B cell (primary cell): ENCODE measurements at regions of chr4 and their contacts with region 1.

Region 1: DNA sequence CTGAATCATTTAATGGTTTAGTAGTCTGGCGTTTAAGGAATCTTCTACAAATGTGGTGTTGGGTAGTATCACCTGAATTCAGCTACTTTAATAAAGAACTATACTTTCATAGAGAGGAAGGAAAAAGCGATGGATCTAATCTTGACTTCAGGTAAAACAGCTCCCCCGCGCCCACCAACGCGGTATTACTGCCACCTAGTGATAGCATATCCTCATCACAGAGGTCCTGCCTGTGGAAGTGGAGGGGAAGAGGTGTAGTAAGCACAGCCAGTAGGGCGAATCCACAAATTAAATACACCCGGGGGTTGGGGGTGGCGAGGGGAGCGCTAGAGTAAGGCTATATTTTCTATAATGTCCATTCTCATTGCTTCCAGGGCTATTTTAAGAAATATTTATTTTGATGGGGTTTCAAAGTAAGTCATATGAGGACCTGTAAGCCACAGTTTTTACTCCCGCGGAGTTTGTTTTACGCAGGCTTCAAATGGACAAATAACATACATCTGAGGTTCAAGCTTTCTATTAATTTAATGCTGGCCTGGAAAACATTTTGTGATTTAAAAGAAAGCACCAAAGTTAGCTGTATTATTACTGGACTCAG is 8.3 kb upstream of the DAPP1 start:
- DNase-seq: peak; percentile 80
- ATAC-seq: peak; percentile 96
- H3K4me3 ChIP-seq: no peak overlapping the region
- H3K4me3 Mint-ChIP-seq: no peak overlapping the region
- H3K27ac ChIP-seq: no peak overlapping the region
- H3K27ac Mint-ChIP-seq: no peak overlapping the region
- H3K4me1 ChIP-seq: peaks cover 0 to 20% of the 10 kb centered on the region in 2 donors
- H3K4me1 Mint-ChIP-seq: peaks cover 25% of the 10 kb centered on the region
- H3K27me3 ChIP-seq: peaks cover 0 to 2% (median 0%) of the 10 kb centered on the region in 4 experiments
- H3K27me3 Mint-ChIP-seq: peaks cover 11% of the 10 kb centered on the region
- CTCF ChIP-seq: peak; percentile 83

Region 2: DNA sequence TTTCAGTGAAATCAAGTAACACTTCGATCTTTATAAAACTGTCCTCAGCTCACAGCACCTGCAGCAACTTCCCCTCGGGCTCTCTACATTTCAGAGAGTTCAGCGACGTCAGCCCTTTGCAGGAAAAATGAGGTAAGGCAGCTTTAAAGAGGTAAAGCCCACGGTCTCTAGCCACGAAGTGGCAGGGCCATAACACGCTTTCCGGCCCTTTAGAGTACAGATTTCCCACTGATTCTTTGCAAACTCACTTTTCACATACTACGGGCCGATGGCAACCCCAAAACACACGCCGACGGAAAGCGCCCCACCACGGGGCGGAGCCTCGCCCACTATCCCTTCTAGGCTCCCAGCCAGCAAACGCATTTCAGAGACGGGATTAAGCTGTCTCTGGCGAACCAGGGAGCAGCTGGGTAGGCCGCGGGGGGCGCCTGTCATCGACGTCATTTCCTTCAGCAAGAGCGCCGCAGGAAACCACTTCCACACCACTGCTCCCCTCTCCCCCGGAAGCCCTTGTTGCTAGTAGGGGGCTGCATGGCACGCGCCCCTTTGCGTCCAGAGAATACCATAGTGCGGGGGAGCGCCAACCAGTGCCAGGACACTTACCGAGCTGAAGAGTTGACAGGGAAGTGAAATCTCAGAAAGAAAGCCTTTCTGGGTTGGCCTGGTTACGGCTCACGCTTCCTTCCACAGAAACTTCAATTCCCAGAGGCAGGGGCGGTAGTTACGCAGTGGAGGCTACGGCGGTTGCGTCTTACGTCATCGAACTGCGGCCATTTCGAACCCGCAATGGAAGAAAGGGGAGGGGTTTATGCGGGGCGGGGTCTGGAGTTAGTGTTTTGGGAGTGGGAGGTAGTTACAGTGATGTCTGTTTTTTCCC is 244.8 kb before region 1 on chr4 and contains the start of gene TRMT10A:
- CTCF ChIA-PET with region 1: interaction called, 44 read pairs
- POLR2A ChIA-PET with region 1: interaction called, 7 read pairs
- intact Hi-C with region 1: loop called (anchors 1 kb)
- DNase-seq: peak; percentile 98
- ATAC-seq: peak; percentile 84
- H3K4me3 ChIP-seq: peak within 1 kb of the TSS; percentile 73 to 92 (median 80)
- H3K4me3 Mint-ChIP-seq: peak within 1 kb of the TSS; percentile 99
- H3K27ac ChIP-seq: peak within 1 kb of the TSS; percentile 96
- H3K27ac Mint-ChIP-seq: peak within 1 kb of the TSS; percentile 100
- H3K4me1 ChIP-seq: peaks cover 4 to 9% of the 10 kb centered on the region in 2 donors
- H3K4me1 Mint-ChIP-seq: peaks cover 18% of the 10 kb centered on the region
- H3K27me3 ChIP-seq: peaks cover 0 to 9% (median 2%) of the 10 kb centered on the region in 4 experiments
- H3K27me3 Mint-ChIP-seq: peaks cover 24% of the 10 kb centered on the region
- CTCF ChIP-seq: no peak
- total RNA-seq, gene TRMT10A: 4.5 and 5.5 TPM in 2 replicates

Region 3: DNA sequence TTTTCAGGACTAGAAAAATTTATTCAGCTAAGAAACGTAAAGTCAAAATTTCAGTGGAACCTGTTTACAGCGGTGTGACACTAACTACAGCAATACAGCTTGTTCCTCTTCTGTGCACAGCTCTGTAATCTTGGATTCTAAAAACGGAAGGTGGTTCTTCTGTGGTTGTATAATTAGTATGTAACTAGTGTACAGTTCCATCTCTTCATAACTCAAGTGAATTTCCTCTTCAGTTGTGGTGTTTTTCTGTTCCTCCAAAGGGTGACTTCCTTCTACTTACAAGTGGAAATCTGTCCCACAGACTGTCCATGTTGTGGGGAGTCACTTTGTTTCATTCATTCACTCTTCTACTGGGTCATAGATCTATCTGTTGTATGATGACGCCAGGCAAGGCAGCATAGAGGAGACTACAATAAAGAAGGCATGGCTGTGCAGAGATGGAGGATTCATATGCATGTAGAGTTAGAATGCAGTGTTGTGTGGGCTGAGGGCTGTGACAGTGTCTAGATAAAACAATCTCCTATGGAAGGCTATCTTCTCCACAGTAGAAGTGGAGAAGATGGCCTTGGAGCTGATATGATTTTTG is 13.7 kb after region 1 on chr4:
- CTCF ChIA-PET with region 1: interaction called, 36 read pairs
- POLR2A ChIA-PET with region 1: interaction called, 4 read pairs
- intact Hi-C with region 1: no loop called
- DNase-seq: peak; percentile 71
- ATAC-seq: peak; percentile 68
- H3K4me3 ChIP-seq: peak overlapping the region in 4 of 5 experiments; percentile 6 to 100 (median 24)
- H3K4me3 Mint-ChIP-seq: peak overlapping the region; percentile 86
- H3K27ac ChIP-seq: peak overlapping the region; percentile 48 to 95
- H3K27ac Mint-ChIP-seq: peak overlapping the region; percentile 93
- H3K4me1 ChIP-seq: peaks cover 84 to 86% of the 10 kb centered on the region in 2 donors
- H3K4me1 Mint-ChIP-seq: peaks cover 82% of the 10 kb centered on the region
- H3K27me3 ChIP-seq: no peaks in the 10 kb centered on the region
- H3K27me3 Mint-ChIP-seq: no peaks in the 10 kb centered on the region
- CTCF ChIP-seq: no peak

Region 4: DNA sequence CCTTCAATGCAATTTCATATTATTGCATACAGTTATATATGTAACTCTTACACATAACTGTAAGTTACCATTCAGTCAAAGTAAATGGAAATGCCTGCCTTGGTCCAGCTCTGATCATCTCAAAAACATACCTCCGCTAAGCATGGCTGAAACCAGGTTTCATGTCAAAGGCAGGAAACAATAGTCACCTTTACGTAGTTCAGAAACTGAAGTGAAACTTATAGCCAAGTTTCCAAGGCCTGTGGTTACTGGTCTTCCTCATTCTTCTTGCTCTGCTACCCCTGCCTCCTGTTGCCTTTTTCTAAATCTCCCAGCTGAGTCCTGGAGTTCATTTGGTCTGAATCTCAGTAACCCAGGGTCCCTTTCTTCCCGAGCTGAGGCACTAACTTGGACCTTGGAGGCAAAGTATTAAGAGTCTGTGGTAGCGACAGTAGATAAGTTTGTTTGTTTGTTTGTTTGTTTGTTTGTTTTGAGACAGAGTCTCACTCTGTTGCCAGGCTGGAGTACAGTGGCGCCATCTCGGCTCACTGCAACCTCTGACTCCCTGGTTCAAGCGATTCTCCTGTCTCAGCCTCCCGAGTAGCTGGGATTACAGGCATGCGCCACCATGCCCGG is 39.1 kb after region 1 on chr4:
- CTCF ChIA-PET with region 1: interaction called, 34 read pairs
- POLR2A ChIA-PET with region 1: no interaction called
- intact Hi-C with region 1: no loop called
- DNase-seq: peak; percentile 79
- ATAC-seq: peak; percentile 81
- H3K4me3 ChIP-seq: no peak overlapping the region
- H3K4me3 Mint-ChIP-seq: peak overlapping the region; percentile 72
- H3K27ac ChIP-seq: peak overlapping the region; percentile 3 to 56
- H3K27ac Mint-ChIP-seq: peak overlapping the region; percentile 84
- H3K4me1 ChIP-seq: peaks cover 31 to 38% of the 10 kb centered on the region in 2 donors
- H3K4me1 Mint-ChIP-seq: peaks cover 68% of the 10 kb centered on the region
- H3K27me3 ChIP-seq: no peaks in the 10 kb centered on the region
- H3K27me3 Mint-ChIP-seq: no peaks in the 10 kb centered on the region
- CTCF ChIP-seq: no peak

Region 5: DNA sequence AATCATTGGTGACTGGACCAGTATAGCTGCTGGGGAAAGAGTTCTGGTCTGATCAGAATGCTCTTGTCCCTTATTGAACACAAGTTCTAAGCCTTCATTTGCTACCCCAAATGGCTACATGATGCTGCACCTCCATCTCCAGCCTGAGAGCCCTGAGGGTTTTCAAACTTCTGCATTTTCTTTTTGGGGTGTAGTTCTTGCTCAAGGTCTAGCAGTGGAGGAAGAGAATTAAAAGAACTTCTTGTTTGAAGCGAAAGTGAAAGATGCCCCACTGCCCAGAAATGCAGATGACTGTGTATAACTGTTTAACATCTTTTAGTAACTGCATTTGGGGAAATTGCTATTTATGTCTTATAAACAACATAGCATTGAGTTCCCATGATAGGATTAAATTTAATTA is 47.3 kb after region 1 on chr4:
- CTCF ChIA-PET with region 1: interaction called, 34 read pairs
- POLR2A ChIA-PET with region 1: no interaction called
- intact Hi-C with region 1: no loop called
- DNase-seq: peak; percentile 78
- ATAC-seq: peak; percentile 75
- H3K4me3 ChIP-seq: peak overlapping the region in 1 of 5 experiments; percentile 5
- H3K4me3 Mint-ChIP-seq: peak overlapping the region; percentile 11
- H3K27ac ChIP-seq: peak overlapping the region; percentile 31 to 84
- H3K27ac Mint-ChIP-seq: peak overlapping the region; percentile 64
- H3K4me1 ChIP-seq: peaks cover 46 to 51% of the 10 kb centered on the region in 2 donors
- H3K4me1 Mint-ChIP-seq: peaks cover 69% of the 10 kb centered on the region
- H3K27me3 ChIP-seq: no peaks in the 10 kb centered on the region
- H3K27me3 Mint-ChIP-seq: no peaks in the 10 kb centered on the region
- CTCF ChIP-seq: no peak

Region 6: DNA sequence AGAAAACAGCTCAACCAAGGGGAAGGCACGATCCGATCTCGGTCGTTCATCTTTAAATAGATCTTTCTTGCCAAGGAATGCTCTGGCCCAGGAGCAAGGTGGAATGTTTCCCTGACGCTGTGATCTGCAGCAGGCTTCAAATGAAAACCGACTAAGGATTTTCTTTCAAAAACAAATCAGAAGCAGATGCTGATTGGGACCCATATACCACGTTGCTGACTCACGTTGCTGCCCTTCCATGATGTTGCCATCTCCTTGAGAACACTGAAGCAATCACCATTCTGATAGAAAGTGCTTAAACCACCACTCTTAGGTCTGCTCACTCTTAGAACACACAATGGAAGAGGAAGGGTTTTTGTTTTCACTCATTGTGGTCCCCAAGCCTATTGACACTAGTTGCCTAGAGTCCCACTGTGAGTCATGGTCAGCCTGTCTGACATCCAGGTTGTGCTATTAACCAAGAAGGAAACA is 59.8 kb after region 1 on chr4:
- CTCF ChIA-PET with region 1: interaction called, 12 read pairs
- POLR2A ChIA-PET with region 1: no interaction called
- intact Hi-C with region 1: no loop called
- DNase-seq: no peak
- ATAC-seq: no peak
- H3K4me3 ChIP-seq: no peak overlapping the region
- H3K4me3 Mint-ChIP-seq: no peak overlapping the region
- H3K27ac ChIP-seq: peak overlapping the region in 1 of 2 donors; percentile 39
- H3K27ac Mint-ChIP-seq: no peak overlapping the region
- H3K4me1 ChIP-seq: no peaks in the 10 kb centered on the region
- H3K4me1 Mint-ChIP-seq: no peaks in the 10 kb centered on the region
- H3K27me3 ChIP-seq: no peaks in the 10 kb centered on the region
- H3K27me3 Mint-ChIP-seq: no peaks in the 10 kb centered on the region
- CTCF ChIP-seq: no peak

Region 7: DNA sequence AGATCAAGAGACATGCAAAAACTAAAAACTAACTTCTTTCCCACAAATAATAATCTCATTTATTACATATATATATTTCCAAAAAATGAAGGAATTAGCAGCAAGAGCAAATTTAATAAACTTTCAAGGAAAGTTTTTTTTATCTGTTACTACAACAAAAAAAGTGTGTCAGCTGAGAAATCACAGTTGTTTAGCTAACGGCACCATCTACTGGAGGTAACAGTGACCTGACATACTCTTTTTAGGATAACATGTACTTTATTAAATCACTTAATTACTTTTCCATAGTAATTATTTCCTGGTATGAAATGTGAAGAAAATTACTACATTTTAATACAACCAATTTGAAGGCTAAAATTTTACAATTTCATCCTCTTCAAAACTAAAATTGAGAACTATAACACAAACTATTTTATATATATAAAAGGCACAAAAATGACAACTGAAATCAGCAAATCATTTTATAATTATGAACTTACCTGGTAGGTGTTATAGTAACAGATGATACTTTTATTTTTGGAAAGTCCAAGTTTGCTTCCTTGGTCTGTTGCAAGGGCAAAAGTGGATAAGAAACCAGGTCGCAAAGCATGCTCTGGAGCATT is 76.8 kb after region 1 on chr4:
- CTCF ChIA-PET with region 1: interaction called, 29 read pairs
- POLR2A ChIA-PET with region 1: no interaction called
- intact Hi-C with region 1: loop called (anchors 1 kb)
- DNase-seq: peak; percentile 68
- ATAC-seq: no peak
- H3K4me3 ChIP-seq: no peak overlapping the region
- H3K4me3 Mint-ChIP-seq: no peak overlapping the region
- H3K27ac ChIP-seq: no peak overlapping the region
- H3K27ac Mint-ChIP-seq: no peak overlapping the region
- H3K4me1 ChIP-seq: no peaks in the 10 kb centered on the region
- H3K4me1 Mint-ChIP-seq: peaks cover 2% of the 10 kb centered on the region
- H3K27me3 ChIP-seq: no peaks in the 10 kb centered on the region
- H3K27me3 Mint-ChIP-seq: no peaks in the 10 kb centered on the region
- CTCF ChIP-seq: peak; percentile 81